Activated CD4-positive, alpha-beta memory T cell treated with anti-CD3 and anti-CD28 coated beads, Interleukin-2, amount 10 ng/mL, durations not matched to agents 7 days and 5 days (primary cell): ENCODE measurements at regions of chr16 and their contacts with region 1.

Region 1: GRCh38 chr16:56681939-56682702 is at the start of gene MT1X:
- DNase-seq: peak; percentile 95
- H3K4me3 Mint-ChIP-seq: peak within 1 kb of the TSS; percentile 89
- H3K27ac Mint-ChIP-seq: peak within 1 kb of the TSS; percentile 92
- H3K4me1 Mint-ChIP-seq: peaks cover 30% of the 10 kb centered on the region
- H3K27me3 Mint-ChIP-seq: no peaks in the 10 kb centered on the region
- total RNA-seq, gene MT1X: 28.4 to 33.1 TPM

Region 2: DNA sequence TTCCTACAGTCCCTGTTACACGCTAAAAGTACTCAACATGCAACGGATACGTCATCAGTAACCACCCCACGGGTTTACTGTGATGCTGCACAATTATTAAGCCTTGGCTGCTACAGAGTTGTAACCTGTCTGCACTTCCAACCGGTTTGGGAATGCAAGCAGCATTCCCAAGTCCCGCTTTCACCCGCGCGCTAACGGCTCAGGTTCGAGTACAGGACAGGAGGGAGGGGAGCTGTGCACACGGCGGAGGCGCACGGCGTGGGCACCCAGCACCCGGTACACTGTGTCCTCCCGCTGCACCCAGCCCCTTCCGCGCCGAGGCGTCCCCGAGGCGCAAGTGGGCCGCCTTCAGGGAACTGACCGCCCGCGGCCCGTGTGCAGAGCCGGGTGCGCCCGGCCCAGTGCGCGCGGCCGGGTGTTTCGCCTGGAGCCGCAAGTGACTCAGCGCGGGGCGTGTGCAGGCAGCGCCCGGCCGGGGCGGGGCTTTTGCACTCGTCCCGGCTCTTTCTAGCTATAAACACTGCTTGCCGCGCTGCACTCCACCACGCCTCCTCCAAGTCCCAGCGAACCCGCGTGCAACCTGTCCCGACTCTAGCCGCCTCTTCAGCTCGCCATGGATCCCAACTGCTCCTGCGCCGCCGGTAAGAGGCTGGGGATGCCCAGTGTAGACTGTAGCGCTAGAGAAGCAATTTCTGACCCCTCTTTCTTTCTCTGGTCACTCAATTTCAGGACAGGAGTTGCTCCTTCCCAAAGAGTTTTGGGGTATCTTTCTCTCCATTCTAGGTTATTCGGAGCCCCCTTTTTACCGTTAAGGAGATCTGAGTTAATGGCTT is 73.9 kb before region 1 on chr16 and contains the start of gene MT2A:
- CTCF ChIA-PET with region 1: interaction called, 3 read pairs
- POLR2A ChIA-PET with region 1: interaction called, 29 read pairs
- DNase-seq: peak; percentile 93
- H3K4me3 Mint-ChIP-seq: peak within 1 kb of the TSS; percentile 93
- H3K27ac Mint-ChIP-seq: peak within 1 kb of the TSS; percentile 78
- H3K4me1 Mint-ChIP-seq: peaks cover 43% of the 10 kb centered on the region
- H3K27me3 Mint-ChIP-seq: peaks cover 2% of the 10 kb centered on the region
- total RNA-seq, gene MT2A: 47.9 to 51.4 TPM